ENCODE measurements at regions of chr13 and their contacts with region 1.

Region 1: GRCh38 chr13:85729296-85729695 is 69.9 kb downstream of the SLITRK6 start:
- DNase-seq: no peak
- ATAC-seq: no peak
- H3K4me3 ChIP-seq: no peak overlapping the region
- H3K4me3 Mint-ChIP-seq: no peak overlapping the region
- H3K27ac ChIP-seq: no peak overlapping the region
- H3K27ac Mint-ChIP-seq: no peak overlapping the region
- H3K4me1 ChIP-seq: no peaks in the 10 kb centered on the region
- H3K4me1 Mint-ChIP-seq: no peaks in the 10 kb centered on the region
- H3K27me3 ChIP-seq: no peaks in the 10 kb centered on the region
- H3K27me3 Mint-ChIP-seq: no peaks in the 10 kb centered on the region
- CTCF ChIP-seq: no peak

Region 2: GRCh38 chr13:84997858-84998257 is 731.4 kb before region 1 on chr13:
- CTCF ChIA-PET with region 1: no interaction called
- POLR2A ChIA-PET with region 1: no interaction called
- intact Hi-C with region 1: loop called in 1 of 2 experiments (anchors 5 kb)
- DNase-seq: no peak
- ATAC-seq: no peak
- H3K4me3 ChIP-seq: no peak overlapping the region
- H3K4me3 Mint-ChIP-seq: no peak overlapping the region
- H3K27ac ChIP-seq: no peak overlapping the region
- H3K27ac Mint-ChIP-seq: no peak overlapping the region
- H3K4me1 ChIP-seq: no peaks in the 10 kb centered on the region
- H3K4me1 Mint-ChIP-seq: no peaks in the 10 kb centered on the region
- H3K27me3 ChIP-seq: no peaks in the 10 kb centered on the region
- H3K27me3 Mint-ChIP-seq: no peaks in the 10 kb centered on the region
- CTCF ChIP-seq: no peak

Region 3: GRCh38 chr13:85768946-85769345 is 39.6 kb after region 1 on chr13:
- CTCF ChIA-PET with region 1: no interaction called
- POLR2A ChIA-PET with region 1: no interaction called
- intact Hi-C with region 1: no loop called
- DNase-seq: no peak
- ATAC-seq: no peak
- H3K4me3 ChIP-seq: no peak overlapping the region
- H3K4me3 Mint-ChIP-seq: no peak overlapping the region
- H3K27ac ChIP-seq: no peak overlapping the region
- H3K27ac Mint-ChIP-seq: no peak overlapping the region
- H3K4me1 ChIP-seq: no peaks in the 10 kb centered on the region
- H3K4me1 Mint-ChIP-seq: no peaks in the 10 kb centered on the region
- H3K27me3 ChIP-seq: no peaks in the 10 kb centered on the region
- H3K27me3 Mint-ChIP-seq: no peaks in the 10 kb centered on the region
- CTCF ChIP-seq: no peak

Measured in CD8-positive, alpha-beta T cell (primary cell).